ENCODE measurements at regions of chr16 and their contacts with region 1.

Region 1: GRCh38 chr16:10314811-10315210 is 71.0 kb upstream of the ATF7IP2 start:
- DNase-seq: peak; percentile 63

Region 2: GRCh38 chr16:10067406-10067805 is 247.4 kb before region 1 on chr16:
- in situ Hi-C with region 1: no loop called
- DNase-seq: no peak

Region 3: GRCh38 chr16:10509534-10510025 is 194.8 kb after region 1 on chr16:
- in situ Hi-C with region 1: loop called (anchors 25 kb)
- DNase-seq: peak; percentile 83

Region 4: DNA sequence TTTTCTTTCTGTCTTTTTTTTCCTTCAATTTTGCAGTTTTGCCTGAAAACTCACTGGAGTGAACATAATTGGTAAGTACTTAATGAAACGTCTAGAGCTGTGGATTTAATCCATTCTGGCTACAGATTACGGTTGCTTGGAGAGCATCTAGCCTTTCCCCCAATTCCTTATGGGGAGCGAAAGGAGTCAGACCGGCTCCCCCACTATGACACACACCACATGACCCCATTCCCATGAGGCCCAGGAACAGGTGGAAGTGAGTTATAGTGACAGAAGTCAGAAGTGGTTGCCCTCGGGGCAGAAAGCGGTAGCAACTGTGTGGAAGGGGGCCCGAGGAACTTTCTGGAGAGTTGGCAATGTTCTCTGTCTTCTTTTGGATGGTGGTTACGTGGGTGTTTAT is 224.4 kb after region 1 on chr16:
- in situ Hi-C with region 1: no loop called
- DNase-seq: no peak

Measured in ACHN (cell line).